ENCODE measurements at regions of chr4 and their contacts with region 1.

Region 1: DNA sequence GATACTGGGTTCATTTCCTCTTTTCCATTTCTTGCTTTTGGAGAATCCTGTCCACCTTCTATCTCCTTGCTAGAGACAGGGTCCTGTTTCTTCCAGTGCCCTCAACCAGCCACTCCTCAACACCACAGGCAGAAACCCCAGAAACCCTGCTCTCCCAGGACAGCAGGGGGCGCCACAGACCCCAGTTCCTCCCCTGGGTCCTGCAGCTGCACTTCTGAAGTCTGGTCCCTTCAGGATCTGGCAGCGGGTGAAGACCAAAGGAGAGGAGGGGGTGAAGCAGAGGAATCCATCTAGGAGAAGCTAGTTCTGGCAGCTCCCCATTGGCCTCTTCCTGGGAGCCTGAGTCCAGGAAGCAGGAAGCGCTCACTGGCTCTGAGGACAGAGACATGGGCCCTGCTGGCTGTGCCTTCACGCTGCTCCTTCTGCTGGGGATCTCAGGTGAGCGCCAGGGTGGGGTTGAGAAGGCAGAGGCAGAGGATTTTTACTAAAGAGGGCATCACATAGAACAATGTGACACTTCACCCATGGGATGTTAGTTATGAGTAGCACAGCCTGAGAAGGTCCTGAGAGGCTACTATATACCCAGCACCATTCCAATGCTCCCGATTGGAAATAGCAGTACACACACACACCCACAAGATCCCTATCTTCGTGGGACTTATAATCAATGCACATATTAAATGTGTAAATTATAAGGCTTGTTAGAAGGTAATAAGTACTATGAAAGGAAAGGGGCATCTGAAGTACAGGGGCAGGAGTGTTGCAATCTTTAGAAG is at the start of gene PRSS48:
- DNase-seq: peak; percentile 42
- H3K4me3 ChIP-seq: no peak within 1 kb of the TSS
- H3K27ac ChIP-seq: no peak within 1 kb of the TSS
- H3K4me1 ChIP-seq: no peaks in the 10 kb centered on the region
- H3K27me3 ChIP-seq: no peaks in the 10 kb centered on the region
- CTCF ChIP-seq: peak; percentile 65 to 92
- total RNA-seq, gene PRSS48: 0.17 TPM in 1 of 2 donors, not detected in the other

Region 2: DNA sequence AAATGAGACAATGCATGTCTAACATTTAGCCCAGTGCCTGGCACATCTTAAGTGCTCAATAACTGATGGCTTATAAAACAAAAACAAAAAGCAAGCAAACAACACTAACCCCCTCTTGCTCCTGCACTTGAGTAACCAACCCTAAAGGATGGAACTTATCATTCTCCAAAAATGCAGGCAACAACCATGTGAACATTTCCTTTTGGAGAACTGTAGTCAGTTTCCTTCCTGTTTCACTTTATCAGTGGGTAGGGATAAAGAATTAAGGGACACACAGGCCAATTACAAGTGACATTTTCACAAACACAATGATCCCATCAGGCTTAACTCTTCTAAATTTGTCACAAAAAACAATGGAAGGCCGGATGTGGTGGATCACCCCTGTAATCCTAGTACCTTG is 147.2 kb before region 1 on chr4:
- CTCF ChIA-PET with region 1: no interaction called
- dilution Hi-C with region 1: no loop called
- in situ Hi-C with region 1: no loop called
- intact Hi-C with region 1: loop called (anchors 10 kb)
- DNase-seq: no peak
- H3K4me3 ChIP-seq: no peak overlapping the region
- H3K27ac ChIP-seq: no peak overlapping the region
- H3K4me1 ChIP-seq: no peaks in the 10 kb centered on the region
- H3K27me3 ChIP-seq: no peaks in the 10 kb centered on the region
- CTCF ChIP-seq: no peak

Region 3: DNA sequence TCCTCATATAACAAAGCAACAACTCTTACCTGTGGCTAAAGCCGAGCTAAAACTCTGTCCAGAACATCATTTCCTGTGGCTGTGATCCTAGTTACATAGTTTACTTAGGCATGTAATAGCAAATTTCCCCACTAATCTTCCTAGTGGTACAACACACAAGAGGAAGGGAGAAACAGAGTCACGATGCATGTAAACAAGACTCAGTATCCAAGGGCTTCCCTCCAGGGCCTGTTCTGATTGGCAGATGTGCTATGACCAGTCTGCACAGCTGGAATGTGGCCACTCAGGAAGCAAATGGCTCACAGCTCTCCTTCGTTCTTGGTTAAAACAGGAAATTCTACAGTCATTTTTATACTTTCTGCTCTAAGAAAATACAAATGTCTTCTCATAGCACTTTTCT is 49.2 kb before region 1 on chr4:
- CTCF ChIA-PET with region 1: no interaction called
- dilution Hi-C with region 1: no loop called
- in situ Hi-C with region 1: no loop called
- intact Hi-C with region 1: no loop called
- DNase-seq: peak; percentile 84
- H3K4me3 ChIP-seq: peak overlapping the region; percentile 0 to 33 (median 14)
- H3K27ac ChIP-seq: peak overlapping the region; percentile 95
- H3K4me1 ChIP-seq: peaks cover 24% of the 10 kb centered on the region
- H3K27me3 ChIP-seq: no peaks in the 10 kb centered on the region
- CTCF ChIP-seq: no peak

Region 4: GRCh38 chr4:151573945-151574344 is 297.0 kb after region 1 on chr4:
- CTCF ChIA-PET with region 1: no interaction called
- dilution Hi-C with region 1: no loop called
- in situ Hi-C with region 1: no loop called
- intact Hi-C with region 1: loop called (anchors 10 kb)
- DNase-seq: peak; percentile 82
- H3K4me3 ChIP-seq: no peak overlapping the region
- H3K27ac ChIP-seq: no peak overlapping the region
- H3K4me1 ChIP-seq: peaks cover 17% of the 10 kb centered on the region
- H3K27me3 ChIP-seq: no peaks in the 10 kb centered on the region
- CTCF ChIP-seq: peak in 1 of 2 donors; percentile 34

Region 5: DNA sequence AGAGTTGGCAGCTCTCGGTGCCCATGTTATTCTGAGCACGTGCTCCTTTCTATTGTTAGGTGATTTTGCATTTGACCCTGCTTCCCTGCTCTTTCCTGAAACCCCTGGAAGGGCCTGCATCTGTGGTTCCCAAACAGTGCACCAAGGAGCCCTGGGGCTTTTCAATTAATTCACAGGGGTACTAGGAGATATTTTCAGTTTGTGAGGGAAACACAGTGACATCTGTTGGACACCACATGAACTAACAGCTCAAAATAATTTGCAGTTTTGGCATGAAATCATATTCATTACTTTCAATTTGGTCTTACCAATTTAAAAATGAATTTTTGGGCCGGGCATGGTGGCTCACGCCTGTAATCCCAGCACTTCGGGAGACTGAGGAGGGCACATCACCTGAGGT is 327.3 kb after region 1 on chr4:
- CTCF ChIA-PET with region 1: no interaction called
- dilution Hi-C with region 1: no loop called
- in situ Hi-C with region 1: no loop called
- intact Hi-C with region 1: loop called (anchors 5 kb)
- DNase-seq: no peak
- H3K4me3 ChIP-seq: no peak overlapping the region
- H3K27ac ChIP-seq: no peak overlapping the region
- H3K4me1 ChIP-seq: peaks cover 9% of the 10 kb centered on the region
- H3K27me3 ChIP-seq: no peaks in the 10 kb centered on the region
- CTCF ChIP-seq: peak; percentile 43 to 48